ENCODE measurements at regions of chr18 and their contacts with region 1.

Region 1: GRCh38 chr18:27605107-27605834 is 420.2 kb upstream of the CHST9 start:
- DNase-seq: peak; percentile 73

Region 2: DNA sequence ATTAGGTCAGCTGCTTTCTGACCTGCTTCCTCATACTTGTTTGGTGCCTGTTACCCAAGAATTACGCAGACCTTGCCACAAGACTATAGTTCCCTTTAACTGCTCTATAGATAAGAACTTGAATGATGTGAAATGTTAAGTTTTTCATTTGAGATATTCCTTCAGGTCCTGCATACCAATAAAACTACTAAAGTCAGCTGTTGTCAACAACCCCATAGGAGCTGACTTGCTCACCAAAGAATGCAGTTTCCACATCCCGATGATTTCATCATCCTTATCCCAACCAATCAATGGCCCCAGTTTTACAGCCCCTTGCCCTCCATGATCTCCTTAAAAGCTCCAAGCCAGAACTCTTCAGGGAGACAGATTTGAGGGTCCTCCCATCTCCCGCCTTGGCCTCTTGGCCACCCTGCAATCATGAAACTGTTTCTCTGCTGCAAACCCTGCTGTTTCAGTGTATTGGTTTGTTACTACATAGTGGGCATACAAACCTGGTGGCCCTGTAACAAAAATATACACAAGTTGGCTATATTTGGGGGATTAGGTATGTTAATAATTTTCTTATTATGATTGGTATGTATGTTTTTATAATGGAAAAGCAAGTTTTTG is 23.9 kb before region 1 on chr18:
- CTCF ChIA-PET with region 1: no interaction called
- POLR2A ChIA-PET with region 1: no interaction called
- DNase-seq: no peak

Region 3: GRCh38 chr18:27750014-27750413 is 144.7 kb after region 1 on chr18:
- CTCF ChIA-PET with region 1: interaction called, 37 read pairs
- POLR2A ChIA-PET with region 1: no interaction called
- DNase-seq: peak; percentile 66